Ascending aorta (tissue), 2 donors: ENCODE measurements at regions of chr3 and their contacts with region 1.

Region 1: DNA sequence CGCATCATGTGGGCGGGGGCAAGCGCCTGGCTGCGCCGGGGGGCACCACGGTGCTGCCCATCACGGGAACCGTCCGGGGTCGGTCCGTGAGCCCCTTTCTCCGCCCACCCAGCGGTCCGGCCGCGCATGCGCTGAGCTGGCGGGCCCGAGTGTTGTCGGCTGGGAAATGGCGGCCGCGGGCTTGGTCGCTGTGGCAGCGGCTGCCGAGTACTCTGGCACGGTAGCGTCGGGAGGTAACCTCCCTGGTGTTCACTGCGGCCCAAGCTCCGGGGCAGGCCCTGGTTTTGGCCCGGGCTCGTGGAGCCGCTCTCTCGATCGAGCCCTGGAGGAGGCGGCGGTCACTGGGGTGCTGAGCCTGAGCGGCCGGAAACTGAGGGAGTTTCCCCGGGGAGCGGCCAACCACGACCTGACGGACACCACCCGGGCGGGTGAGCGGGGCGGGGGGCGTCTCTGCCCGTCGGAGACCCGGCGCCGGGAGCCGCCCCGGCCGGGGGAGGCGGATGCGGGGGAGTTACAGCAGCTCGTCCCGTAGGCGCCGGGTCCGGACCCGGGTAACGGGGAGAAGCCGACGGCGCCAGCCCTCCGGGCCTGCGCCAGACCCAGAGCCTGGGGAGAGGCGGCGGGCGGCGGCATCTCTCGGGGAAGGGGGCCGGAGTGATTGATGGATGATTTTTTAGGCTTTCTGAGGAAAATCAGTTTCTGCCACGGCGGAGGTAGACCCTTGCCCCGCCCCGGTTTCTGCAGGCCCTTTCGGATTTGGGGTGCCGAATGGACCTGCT is at the start of gene LRCH3:
- DNase-seq: peak; percentile 19 to 89
- H3K4me3 ChIP-seq: peak within 1 kb of the TSS; percentile 88 to 97
- H3K27ac ChIP-seq: peak within 1 kb of the TSS; percentile 95 to 98
- H3K4me1 ChIP-seq: peaks cover 0 to 13% of the 10 kb centered on the region in 2 donors
- H3K27me3 ChIP-seq: no peaks in the 10 kb centered on the region
- CTCF ChIP-seq: no peak
- total RNA-seq, gene LRCH3: 22.2 TPM

Region 2: GRCh38 chr3:197339841-197340520 is 451.3 kb before region 1 on chr3:
- intact Hi-C with region 1: no loop called
- DNase-seq: peak in 1 of 2 donors; percentile 39
- H3K4me3 ChIP-seq: no peak overlapping the region
- H3K27ac ChIP-seq: no peak overlapping the region
- H3K4me1 ChIP-seq: no peaks in the 10 kb centered on the region
- H3K27me3 ChIP-seq: no peaks in the 10 kb centered on the region
- CTCF ChIP-seq: no peak

Region 3: GRCh38 chr3:197380786-197381185 is 410.5 kb before region 1 on chr3:
- intact Hi-C with region 1: no loop called
- DNase-seq: no peak
- H3K4me3 ChIP-seq: no peak overlapping the region
- H3K27ac ChIP-seq: no peak overlapping the region
- H3K4me1 ChIP-seq: no peaks in the 10 kb centered on the region
- H3K27me3 ChIP-seq: no peaks in the 10 kb centered on the region
- CTCF ChIP-seq: no peak

Region 4: DNA sequence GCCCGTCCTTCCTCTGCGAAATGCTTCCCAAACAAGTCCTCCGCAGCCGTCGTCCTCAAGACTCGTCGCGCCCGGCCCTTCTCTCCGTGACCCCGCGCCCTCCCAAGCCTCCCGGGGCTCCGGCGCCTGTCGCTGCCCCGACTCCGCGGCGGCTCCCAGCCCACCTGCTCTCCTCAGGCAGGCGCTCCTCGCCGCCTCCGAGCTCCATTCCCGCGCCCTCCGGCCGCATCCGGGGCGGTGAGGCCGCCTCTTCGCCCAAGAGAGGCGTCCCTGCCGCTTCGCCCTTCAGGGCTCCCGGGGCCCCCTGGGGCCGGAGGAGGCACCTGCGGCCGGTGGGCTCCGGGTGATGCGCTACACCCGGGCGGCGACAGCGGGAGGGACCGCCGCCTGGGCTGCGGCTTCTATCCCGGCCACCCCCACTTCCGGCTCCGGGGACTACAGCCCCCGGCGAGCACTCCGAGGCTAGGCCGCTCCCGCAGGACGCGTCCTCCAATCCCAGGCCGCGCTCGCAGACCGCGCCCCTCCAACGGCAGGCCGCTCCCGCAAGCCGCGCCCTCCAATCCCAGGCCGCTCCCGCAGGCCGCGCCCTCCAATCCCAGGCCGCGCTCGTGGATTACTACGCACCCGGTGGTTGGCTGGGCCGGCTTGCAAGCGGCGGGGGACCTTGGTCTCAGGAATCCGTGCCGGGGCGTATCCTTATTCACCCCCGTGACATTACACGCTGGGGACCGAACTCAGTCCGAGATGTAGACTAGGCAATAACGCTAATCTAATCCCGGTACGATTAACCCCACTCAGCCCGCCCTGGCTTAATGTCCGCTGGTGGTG is 54.6 kb before region 1 on chr3 and contains the start of gene RUBCN:
- intact Hi-C with region 1: loop called (anchors 1 kb)
- DNase-seq: peak; percentile 84 to 97
- H3K4me3 ChIP-seq: peak within 1 kb of the TSS; percentile 87 to 99
- H3K27ac ChIP-seq: peak within 1 kb of the TSS; percentile 89 to 95
- H3K4me1 ChIP-seq: peaks cover 0 to 4% of the 10 kb centered on the region in 2 donors
- H3K27me3 ChIP-seq: no peaks in the 10 kb centered on the region
- CTCF ChIP-seq: no peak
- total RNA-seq, gene RUBCN: 27.4 TPM

Region 5: GRCh38 chr3:197749601-197750395 is 41.5 kb before region 1 on chr3 and contains the start of gene FYTTD1:
- intact Hi-C with region 1: loop called (anchors 1 kb)
- DNase-seq: peak; percentile 60 to 94
- H3K4me3 ChIP-seq: peak within 1 kb of the TSS; percentile 74 to 95
- H3K27ac ChIP-seq: peak within 1 kb of the TSS; percentile 96 to 100
- H3K4me1 ChIP-seq: peaks cover 0 to 17% of the 10 kb centered on the region in 2 donors
- H3K27me3 ChIP-seq: no peaks in the 10 kb centered on the region
- CTCF ChIP-seq: peak; percentile 48 to 73 (median 60)
- total RNA-seq, gene FYTTD1: 14.0 TPM

Region 6: DNA sequence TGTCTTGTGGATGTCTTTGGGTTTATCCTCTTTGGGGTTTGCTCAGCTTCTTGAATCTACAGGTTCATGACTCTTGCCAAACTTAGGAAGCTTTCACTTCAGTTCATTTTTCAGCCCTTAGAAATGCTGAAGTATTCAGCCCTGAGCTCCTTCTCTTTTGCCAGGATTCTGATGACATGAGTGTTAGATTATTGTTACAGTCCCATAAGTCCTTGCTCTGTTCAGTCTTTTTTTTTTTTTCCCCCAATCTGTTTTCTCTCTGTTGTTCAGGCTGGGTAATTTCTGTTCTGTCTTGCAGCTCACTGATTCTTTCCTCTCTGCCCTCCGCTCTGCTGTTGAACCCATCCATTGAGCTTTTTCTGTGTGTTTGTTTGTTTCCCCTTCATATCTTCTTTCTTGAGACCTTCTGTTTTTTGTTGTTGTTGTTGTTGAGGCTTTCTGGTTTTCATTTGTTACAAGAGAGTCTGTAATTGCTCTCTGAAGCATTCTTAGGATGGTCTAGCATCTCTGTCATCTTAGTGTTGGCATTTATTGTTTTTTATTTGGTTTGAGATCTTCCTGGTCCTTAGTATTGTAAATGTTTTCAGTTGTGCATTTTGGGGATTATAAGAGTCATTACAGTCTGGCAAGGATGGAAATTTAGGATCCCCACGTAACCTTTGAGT is 18.2 kb after region 1 on chr3:
- intact Hi-C with region 1: loop called (anchors 1 kb)
- DNase-seq: no peak
- H3K4me3 ChIP-seq: peak overlapping the region in 1 of 2 donors; percentile 7
- H3K27ac ChIP-seq: peak overlapping the region; percentile 71 to 74
- H3K4me1 ChIP-seq: peaks cover 6 to 33% of the 10 kb centered on the region in 2 donors
- H3K27me3 ChIP-seq: no peaks in the 10 kb centered on the region
- CTCF ChIP-seq: no peak

Region 7: GRCh38 chr3:197820550-197821335 is 29.4 kb after region 1 on chr3:
- intact Hi-C with region 1: loop called (anchors 5 kb)
- DNase-seq: no peak
- H3K4me3 ChIP-seq: no peak overlapping the region
- H3K27ac ChIP-seq: no peak overlapping the region
- H3K4me1 ChIP-seq: peaks cover 0 to 2% of the 10 kb centered on the region in 2 donors
- H3K27me3 ChIP-seq: no peaks in the 10 kb centered on the region
- CTCF ChIP-seq: no peak

Region 8: GRCh38 chr3:197880491-197881269 is 89.4 kb after region 1 on chr3:
- intact Hi-C with region 1: no loop called
- DNase-seq: no peak
- H3K4me3 ChIP-seq: no peak overlapping the region
- H3K27ac ChIP-seq: no peak overlapping the region
- H3K4me1 ChIP-seq: no peaks in the 10 kb centered on the region
- H3K27me3 ChIP-seq: no peaks in the 10 kb centered on the region
- CTCF ChIP-seq: no peak